ENCODE measurements at regions of chr17 and their contacts with region 1.

Region 1: GRCh38 chr17:81666342-81667191 is at the starts of genes CCDC137 and OXLD1:
- DNase-seq: peak; percentile 93
- ATAC-seq: peak; percentile 97 to 98
- H3K4me3 ChIP-seq: peak within 1 kb of the TSS; percentile 78 to 97 (median 88)
- H3K27ac ChIP-seq: peak within 1 kb of the TSS; percentile 73 to 87 (median 84)
- H3K4me1 ChIP-seq: peaks cover 19 to 21% of the 10 kb centered on the region in 2 donors
- H3K27me3 ChIP-seq: no peaks in the 10 kb centered on the region
- CTCF ChIP-seq: no peak
- POLR2A ChIP-seq: peak; percentile 69 to 88
- total RNA-seq, gene CCDC137: 6.7 to 17.1 (median 11.2) TPM
- total RNA-seq, gene OXLD1: 15.5 to 32.2 (median 22.2) TPM

Region 2: DNA sequence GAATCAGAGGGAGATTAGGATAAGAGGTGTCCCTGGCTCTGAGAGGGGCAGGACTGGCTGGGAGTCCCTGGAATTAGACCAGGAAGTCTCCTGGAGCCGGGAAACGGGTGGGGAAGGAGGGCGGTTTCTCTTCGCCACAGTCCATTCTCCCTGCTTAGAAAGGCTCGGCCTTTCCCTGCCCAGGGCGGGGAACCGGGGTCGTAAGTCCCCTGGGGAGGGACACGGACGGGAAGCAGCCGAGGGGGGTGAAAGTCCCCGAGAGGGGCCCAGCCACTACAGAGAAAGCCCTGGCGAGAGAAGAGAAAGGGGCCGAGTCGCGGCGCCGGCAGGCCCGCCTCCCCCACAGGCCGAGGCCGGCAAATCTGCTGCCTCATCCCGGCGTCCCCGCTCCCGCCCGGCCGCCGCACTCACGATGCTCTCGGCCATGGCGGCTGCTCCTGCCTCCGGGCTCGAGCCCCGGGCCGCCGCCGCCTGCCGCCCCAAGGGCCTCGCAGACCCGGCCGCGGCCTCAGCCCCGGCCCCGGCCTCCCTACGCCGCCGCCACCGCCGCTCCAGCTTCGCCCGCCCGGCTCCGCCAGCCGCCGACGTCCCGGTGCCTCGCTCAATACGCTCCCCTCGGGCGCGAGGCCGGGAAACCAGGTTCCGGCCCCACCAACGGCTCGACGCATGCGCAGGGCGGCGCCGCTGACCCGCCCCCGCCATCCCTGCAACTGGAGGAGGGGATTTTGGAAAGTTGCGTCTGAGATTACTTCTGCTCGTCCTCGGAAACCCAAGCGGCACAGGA is 29.9 kb before region 1 on chr17 and contains the starts of genes NPLOC4 and TSPAN10:
- in situ Hi-C with region 1: no loop called
- intact Hi-C with region 1: loop called (anchors 2 kb)
- DNase-seq: peak; percentile 73 to 80
- ATAC-seq: peak; percentile 77
- H3K4me3 ChIP-seq: peak within 1 kb of the TSS; percentile 72 to 97 (median 94)
- H3K27ac ChIP-seq: peak within 1 kb of the TSS; percentile 95 to 98 (median 98)
- H3K4me1 ChIP-seq: peaks cover 23 to 26% of the 10 kb centered on the region in 2 donors
- H3K27me3 ChIP-seq: no peaks in the 10 kb centered on the region
- CTCF ChIP-seq: peak in 2 of 5 experiments; percentile 22 to 25
- POLR2A ChIP-seq: peak; percentile 97 to 99
- total RNA-seq, gene NPLOC4: 176 to 290 (median 263) TPM
- total RNA-seq, gene TSPAN10: 0.22 to 0.26 TPM in 2 of 4 donors, not detected in the others

Region 3: DNA sequence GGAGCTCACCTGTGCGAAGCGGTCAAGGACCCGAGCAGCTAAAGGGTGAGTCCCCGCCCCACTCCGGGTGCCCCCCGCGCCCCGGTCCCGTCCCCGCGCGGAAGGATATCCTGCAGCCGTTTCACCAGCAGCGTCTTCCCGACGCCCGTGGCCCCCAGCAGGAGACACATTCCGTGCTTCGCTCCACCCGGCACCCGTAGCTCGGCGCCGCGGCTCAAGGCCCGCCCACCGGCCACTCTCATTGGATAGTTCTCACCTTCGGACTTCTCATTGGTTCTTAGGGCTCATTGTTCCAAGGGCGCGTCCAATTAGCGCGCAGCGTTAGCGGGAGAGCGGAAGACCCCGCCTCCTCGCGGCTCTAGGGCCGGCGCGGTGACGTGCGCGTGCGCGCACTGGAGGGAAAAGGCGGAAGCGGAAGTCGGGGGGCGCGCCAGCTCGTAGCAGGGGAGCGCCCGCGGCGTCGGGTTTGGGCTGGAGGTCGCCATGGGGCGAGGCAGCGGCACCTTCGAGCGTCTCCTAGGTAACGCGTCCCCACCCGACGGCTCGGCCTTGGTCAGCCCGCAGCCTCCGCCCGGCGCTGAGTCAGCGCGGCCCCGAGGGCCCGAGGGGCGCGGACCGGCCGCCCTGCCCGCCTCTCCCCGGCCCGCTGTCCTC is 17.1 kb after region 1 on chr17 and contains the starts of genes ARL16 and HGS:
- in situ Hi-C with region 1: no loop called
- intact Hi-C with region 1: loop called (anchors 1 kb)
- DNase-seq: peak; percentile 96 to 99
- ATAC-seq: peak; percentile 99 to 100
- H3K4me3 ChIP-seq: peak within 1 kb of the TSS; percentile 90 to 99 (median 97)
- H3K27ac ChIP-seq: peak within 1 kb of the TSS; percentile 82 to 97 (median 88)
- H3K4me1 ChIP-seq: peaks cover 23 to 27% of the 10 kb centered on the region in 2 donors
- H3K27me3 ChIP-seq: no peaks in the 10 kb centered on the region
- CTCF ChIP-seq: no peak
- POLR2A ChIP-seq: peak; percentile 69 to 90
- total RNA-seq, gene ARL16: 12.9 to 23.6 (median 20.0) TPM
- total RNA-seq, gene HGS: 62.1 to 150 (median 113) TPM

Measured in gastrocnemius medialis (tissue), 4 donors.